Activated CD4-positive, alpha-beta T cell treated with anti-CD3 and anti-CD28 coated beads for 36 hours (primary cell): ENCODE measurements at regions of chr10 and their contacts with region 1.

Region 1: GRCh38 chr10:130301021-130301892 is 165.1 kb downstream of the GLRX3 start:
- DNase-seq: peak; percentile 89
- ATAC-seq: peak; percentile 68
- H3K4me3 Mint-ChIP-seq: peak overlapping the region; percentile 80
- H3K27ac Mint-ChIP-seq: peak overlapping the region; percentile 75
- H3K4me1 Mint-ChIP-seq: peaks cover 12% of the 10 kb centered on the region
- H3K27me3 Mint-ChIP-seq: no peaks in the 10 kb centered on the region

Region 2: DNA sequence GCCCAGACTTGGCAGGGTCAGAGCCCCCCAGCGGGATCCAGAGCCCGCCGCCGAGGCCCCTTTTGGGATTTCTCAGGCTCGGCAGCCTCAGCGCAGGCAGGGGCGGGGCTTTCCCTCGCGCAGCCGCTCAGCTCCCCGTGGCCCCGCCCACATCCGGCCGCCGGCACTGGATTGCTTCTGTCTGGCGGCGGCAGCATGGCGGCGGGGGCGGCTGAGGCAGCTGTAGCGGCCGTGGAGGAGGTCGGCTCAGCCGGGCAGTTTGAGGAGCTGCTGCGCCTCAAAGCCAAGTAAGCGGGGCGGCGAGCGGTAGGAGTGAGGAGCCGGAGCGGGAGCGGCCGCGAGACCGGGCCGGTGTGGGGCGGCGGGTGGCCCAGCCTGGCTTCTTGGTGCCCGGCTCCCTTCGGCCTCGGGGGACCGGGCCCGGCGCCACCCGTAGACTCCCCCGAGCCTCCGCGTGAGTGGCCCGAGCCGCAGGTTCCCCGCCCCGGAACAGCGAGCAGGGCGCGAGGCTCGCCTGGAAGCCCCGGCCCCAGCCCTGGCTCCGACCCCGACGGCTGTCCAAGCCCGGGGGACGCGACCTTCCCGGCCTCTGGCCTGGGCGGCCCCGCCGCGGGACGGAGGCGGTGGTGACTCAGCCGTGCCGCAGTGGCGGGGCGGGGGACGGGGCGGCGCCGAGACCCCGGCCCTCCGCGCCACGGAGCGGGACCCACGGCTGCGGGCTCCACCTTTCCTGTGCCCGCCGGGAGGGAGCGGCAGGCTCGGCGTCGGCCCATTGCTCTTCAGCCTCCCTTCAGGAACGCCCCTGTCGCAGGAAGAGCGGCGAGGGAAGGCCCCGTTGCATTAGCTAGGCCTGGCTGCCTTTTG is 164.8 kb before region 1 on chr10 and contains the start of gene GLRX3:
- CTCF ChIA-PET with region 1: no interaction called
- POLR2A ChIA-PET with region 1: interaction called, 3 read pairs
- intact Hi-C with region 1: loop called in 1 of 2 experiments (anchors 1 kb)
- DNase-seq: peak; percentile 95
- ATAC-seq: peak; percentile 82
- H3K4me3 Mint-ChIP-seq: peak within 1 kb of the TSS; percentile 84
- H3K27ac Mint-ChIP-seq: peak within 1 kb of the TSS; percentile 82
- H3K4me1 Mint-ChIP-seq: peaks cover 41% of the 10 kb centered on the region
- H3K27me3 Mint-ChIP-seq: peaks cover 2% of the 10 kb centered on the region
- total RNA-seq, gene GLRX3: 117 to 123 TPM

Region 3: GRCh38 chr10:130282492-130283233 is 18.6 kb before region 1 on chr10:
- CTCF ChIA-PET with region 1: no interaction called
- POLR2A ChIA-PET with region 1: no interaction called
- intact Hi-C with region 1: no loop called
- DNase-seq: no peak
- ATAC-seq: no peak
- H3K4me3 Mint-ChIP-seq: no peak overlapping the region
- H3K27ac Mint-ChIP-seq: no peak overlapping the region
- H3K4me1 Mint-ChIP-seq: no peaks in the 10 kb centered on the region
- H3K27me3 Mint-ChIP-seq: peaks cover 2% of the 10 kb centered on the region